GM12878 (cell line): ENCODE measurements at regions of chr9 and their contacts with region 1.

Region 1: DNA sequence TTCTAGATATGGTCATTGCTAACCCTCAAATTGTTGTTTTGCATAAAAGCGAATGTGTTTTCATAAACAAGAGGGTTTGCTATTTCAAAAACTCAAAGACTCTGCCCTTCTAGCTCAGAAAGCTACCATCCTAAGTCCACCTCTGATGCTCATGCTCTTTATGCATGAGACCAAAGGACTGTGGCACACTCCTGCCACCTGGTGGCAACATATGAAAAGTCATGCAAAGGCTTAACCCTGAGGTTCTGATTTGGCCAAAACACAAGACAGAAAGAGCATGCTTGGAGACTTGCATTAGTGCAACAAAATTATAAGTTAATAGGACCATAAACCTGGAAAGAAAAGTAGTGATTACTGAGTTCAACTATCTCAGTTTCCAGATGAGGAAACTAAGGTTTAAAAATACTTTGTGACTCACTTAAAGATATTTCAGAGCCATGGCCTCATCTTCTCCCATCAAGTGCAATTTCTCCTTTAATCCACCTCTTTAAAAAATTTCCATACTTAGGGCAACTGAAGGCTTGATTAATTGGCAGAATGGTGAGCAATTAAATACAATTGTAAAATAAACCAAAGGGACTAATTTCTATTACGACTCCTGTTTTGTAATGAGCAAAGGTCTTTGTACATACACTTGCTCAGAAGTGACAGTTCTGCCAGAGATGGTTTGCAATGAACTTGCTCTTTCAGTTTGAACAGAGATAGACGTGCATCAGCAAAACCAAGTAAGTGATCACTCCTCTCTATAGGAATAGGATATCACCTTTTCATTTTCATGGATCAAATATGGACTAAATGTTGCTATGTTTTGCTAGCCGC is 110.7 kb upstream of the RAD23B start:
- DNase-seq: peak; percentile 67
- ATAC-seq: peak; percentile 75
- H3K4me3 ChIP-seq: peak overlapping the region; percentile 39; the same call in 1 of the 2 replicates
- H3K27ac ChIP-seq: no peak overlapping the region
- H3K4me1 ChIP-seq: peaks cover 18% of the 10 kb centered on the region
- H3K27me3 ChIP-seq: no peaks in the 10 kb centered on the region
- CTCF ChIP-seq: peak; percentile 83 to 94 (median 94); a peak in 5 of 6 replicates
- EP300 ChIP-seq: no peak
- POLR2A ChIP-seq: no peak
- RAD21 ChIP-seq: peak; percentile 92

Region 2: DNA sequence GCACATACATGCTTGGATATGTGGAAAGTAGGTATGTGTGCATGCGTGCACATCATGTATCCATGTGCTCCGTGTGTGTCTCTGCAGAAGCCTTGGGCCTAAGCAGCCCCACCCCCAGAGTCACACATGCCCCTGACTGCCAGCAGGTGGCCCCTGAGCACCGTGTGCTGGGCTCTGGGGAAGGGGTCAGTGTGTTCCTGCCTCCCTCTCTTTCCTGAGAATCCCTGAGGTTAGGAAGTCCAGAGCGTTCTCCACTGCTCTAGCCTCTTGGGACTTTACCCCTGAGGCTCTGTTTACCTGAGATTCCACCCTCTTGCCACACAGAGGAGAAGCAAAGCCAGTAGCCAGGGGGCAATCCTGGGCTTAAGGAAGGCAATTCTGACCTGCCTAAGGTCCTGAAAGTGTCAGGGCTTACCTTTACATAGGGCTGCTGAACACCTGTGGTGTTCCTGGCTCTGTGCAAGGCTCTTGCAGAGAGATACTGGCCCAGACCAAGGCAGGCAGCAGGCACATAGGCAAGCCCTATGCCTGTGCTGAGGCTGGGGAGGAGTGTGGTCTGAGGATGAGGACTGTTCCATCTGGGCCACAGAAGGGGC is 1270.8 kb before region 1 on chr9:
- CTCF ChIA-PET with region 1: no interaction called
- POLR2A ChIA-PET with region 1: no interaction called
- RAD21 ChIA-PET with region 1: no interaction called
- SMC1A ChIA-PET with region 1: no interaction called
- in situ Hi-C with region 1: no loop called
- intact Hi-C with region 1: loop called (anchors 5 kb)
- DNase-seq: no peak
- ATAC-seq: peak; percentile 99
- H3K4me3 ChIP-seq: no peak overlapping the region
- H3K27ac ChIP-seq: no peak overlapping the region
- H3K4me1 ChIP-seq: no peaks in the 10 kb centered on the region
- H3K27me3 ChIP-seq: no peaks in the 10 kb centered on the region; a peak in 1 of 4 replicates
- CTCF ChIP-seq: peak; percentile 67 to 80 (median 67)
- EP300 ChIP-seq: no peak
- POLR2A ChIP-seq: no peak
- RAD21 ChIP-seq: peak; percentile 67

Region 3: GRCh38 chr9:107137495-107138202 is 34.7 kb before region 1 on chr9:
- CTCF ChIA-PET with region 1: interaction called, 19 read pairs
- POLR2A ChIA-PET with region 1: no interaction called
- RAD21 ChIA-PET with region 1: interaction called, 23 read pairs
- SMC1A ChIA-PET with region 1: interaction called, 11 read pairs
- in situ Hi-C with region 1: no loop called
- intact Hi-C with region 1: no loop called
- DNase-seq: no peak
- ATAC-seq: peak; percentile 70
- H3K4me3 ChIP-seq: no peak overlapping the region
- H3K27ac ChIP-seq: no peak overlapping the region
- H3K4me1 ChIP-seq: no peaks in the 10 kb centered on the region
- H3K27me3 ChIP-seq: peaks cover 0 to 3% of the 10 kb centered on the region in 2 experiments; a peak in 1 of 4 replicates
- CTCF ChIP-seq: peak; percentile 46 to 65 (median 57)
- EP300 ChIP-seq: no peak
- POLR2A ChIP-seq: no peak
- RAD21 ChIP-seq: peak; percentile 55

Region 4: DNA sequence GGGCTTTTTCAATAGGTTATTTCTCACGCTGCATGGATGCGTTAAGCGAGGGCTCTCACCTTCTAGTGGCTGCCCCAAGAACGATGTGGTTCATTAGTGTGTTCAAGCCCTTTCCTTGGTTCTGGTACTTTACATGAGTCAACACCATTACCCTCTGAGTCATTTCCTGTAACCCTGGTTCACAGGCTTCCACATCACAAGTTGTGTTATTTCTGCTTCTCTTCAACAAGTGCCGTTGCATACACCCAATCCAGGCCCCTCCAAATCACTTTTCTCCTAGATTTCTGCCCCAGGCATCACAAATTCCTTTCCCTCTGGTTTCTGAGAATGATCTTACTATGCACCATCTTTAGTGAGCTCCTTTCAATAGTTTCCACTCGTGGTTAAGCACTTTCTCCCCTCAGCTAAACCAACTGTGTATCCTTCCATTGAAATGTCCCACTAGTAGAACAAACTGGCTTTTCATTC is 41.2 kb after region 1 on chr9:
- CTCF ChIA-PET with region 1: interaction called, 28 read pairs
- POLR2A ChIA-PET with region 1: interaction called, 47 read pairs
- RAD21 ChIA-PET with region 1: interaction called, 115 read pairs
- SMC1A ChIA-PET with region 1: interaction called, 94 read pairs
- in situ Hi-C with region 1: no loop called
- intact Hi-C with region 1: loop called (anchors 1 kb)
- DNase-seq: peak; percentile 76
- ATAC-seq: peak; percentile 96
- H3K4me3 ChIP-seq: no peak overlapping the region
- H3K27ac ChIP-seq: peak overlapping the region; percentile 46; the same call in 1 of the 2 replicates
- H3K4me1 ChIP-seq: peaks cover 7% of the 10 kb centered on the region; the same call in 1 of the 2 replicates
- H3K27me3 ChIP-seq: no peaks in the 10 kb centered on the region
- CTCF ChIP-seq: no peak
- EP300 ChIP-seq: peak; percentile 44 to 72; a peak in 1 of 4 replicates
- POLR2A ChIP-seq: no peak
- RAD21 ChIP-seq: no peak

Region 5: DNA sequence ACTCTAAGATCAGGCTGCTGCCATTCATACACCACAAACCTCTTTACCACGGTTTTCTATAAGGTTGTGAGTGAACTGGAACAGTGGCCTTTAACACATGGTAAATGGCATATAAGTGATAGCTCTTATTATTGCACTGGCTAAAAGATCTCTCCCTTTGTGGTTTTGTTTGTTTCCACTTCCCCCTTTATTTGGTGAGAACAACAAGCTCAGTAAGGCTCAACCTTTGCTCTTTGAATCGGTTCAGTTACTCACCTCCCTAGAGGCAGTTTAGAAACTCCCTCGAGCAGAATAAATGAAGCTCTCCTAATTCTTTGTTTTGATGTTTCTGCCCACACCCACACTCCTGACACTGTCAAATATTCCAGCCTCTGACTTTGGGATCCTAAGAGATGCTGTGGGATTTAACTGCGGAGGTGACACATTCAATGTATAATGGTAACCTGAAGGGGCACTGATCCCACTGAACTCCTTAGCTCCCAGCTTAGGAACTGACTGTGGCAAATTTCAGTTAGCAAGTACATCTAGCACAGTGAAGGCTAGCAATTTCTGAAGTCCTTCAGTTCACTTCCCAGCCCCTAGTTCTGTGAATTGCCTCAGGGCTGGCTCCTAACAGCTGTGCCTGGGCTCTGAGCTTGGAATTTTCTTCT is 88.2 kb after region 1 on chr9:
- CTCF ChIA-PET with region 1: interaction called, 39 read pairs
- POLR2A ChIA-PET with region 1: interaction called, 11 read pairs
- RAD21 ChIA-PET with region 1: interaction called, 78 read pairs
- SMC1A ChIA-PET with region 1: interaction called, 43 read pairs
- in situ Hi-C with region 1: no loop called
- intact Hi-C with region 1: loop called (anchors 5 kb)
- DNase-seq: peak; percentile 88
- ATAC-seq: peak; percentile 98
- H3K4me3 ChIP-seq: peak overlapping the region; percentile 27; the same call in 1 of the 2 replicates
- H3K27ac ChIP-seq: peak overlapping the region; percentile 36
- H3K4me1 ChIP-seq: peaks cover 11% of the 10 kb centered on the region
- H3K27me3 ChIP-seq: no peaks in the 10 kb centered on the region
- CTCF ChIP-seq: no peak
- EP300 ChIP-seq: peak; percentile 95 to 97
- POLR2A ChIP-seq: no peak
- RAD21 ChIP-seq: no peak

Region 6: DNA sequence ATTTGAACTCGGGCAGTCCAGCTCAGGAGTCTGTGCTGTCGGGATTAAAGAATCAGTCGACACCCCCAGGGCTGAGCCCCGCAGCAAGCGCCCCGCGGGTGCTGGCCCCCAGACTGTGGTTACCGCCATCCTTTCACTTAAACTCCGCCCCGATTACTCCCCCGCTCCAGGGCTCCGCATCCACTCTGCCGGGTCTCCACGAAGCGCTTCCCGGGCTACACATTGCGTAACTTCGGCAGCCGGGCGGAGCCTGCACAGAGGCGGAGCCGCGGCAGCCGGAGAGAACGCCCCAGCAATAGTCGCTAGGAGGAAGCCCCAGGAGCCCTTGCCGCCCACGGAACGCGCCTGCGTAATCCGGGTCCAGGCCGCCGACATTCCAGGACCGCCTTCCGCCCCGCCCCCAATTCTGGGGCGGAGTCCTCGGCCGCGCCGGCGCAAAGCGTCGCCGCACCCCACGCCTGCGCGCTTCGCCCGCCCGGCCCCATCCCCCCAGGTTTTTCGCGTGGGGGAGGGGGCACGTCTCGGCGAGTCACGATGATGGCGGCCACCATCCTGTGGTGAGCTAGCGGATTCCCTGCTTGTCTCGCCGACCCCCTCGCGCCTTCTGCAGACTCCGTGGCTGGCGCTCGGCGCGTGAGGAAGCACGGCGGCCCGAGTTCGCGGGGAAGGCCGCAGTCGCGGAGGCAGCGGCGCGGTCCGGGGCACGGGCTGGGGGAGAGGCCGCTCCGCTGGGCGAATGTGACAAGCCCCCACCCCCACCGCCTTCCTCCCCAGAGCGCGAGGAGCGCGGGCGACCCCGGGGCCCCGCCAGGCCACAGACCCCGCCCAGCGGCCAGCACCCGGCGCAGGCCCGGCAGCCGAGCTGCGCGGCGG is 110.6 kb after region 1 on chr9 and contains the start of gene RAD23B:
- CTCF ChIA-PET with region 1: interaction called, 3 read pairs
- POLR2A ChIA-PET with region 1: interaction called, 3 read pairs
- RAD21 ChIA-PET with region 1: interaction called, 18 read pairs
- SMC1A ChIA-PET with region 1: interaction called, 10 read pairs
- in situ Hi-C with region 1: no loop called
- intact Hi-C with region 1: loop called (anchors 5 kb)
- DNase-seq: peak; percentile 88
- ATAC-seq: peak; percentile 89
- H3K4me3 ChIP-seq: peak within 1 kb of the TSS; percentile 82
- H3K27ac ChIP-seq: peak within 1 kb of the TSS; percentile 92
- H3K4me1 ChIP-seq: peaks cover 8% of the 10 kb centered on the region; the same call in 1 of the 2 replicates
- H3K27me3 ChIP-seq: no peaks in the 10 kb centered on the region
- CTCF ChIP-seq: no peak
- EP300 ChIP-seq: no peak
- POLR2A ChIP-seq: peak; percentile 93
- RAD21 ChIP-seq: no peak
- polyA plus RNA-seq, gene RAD23B: 24.1 to 26.4 TPM